ENCODE measurements at regions of chr14 and their contacts with region 1.

Region 1: GRCh38 chr14:74109369-74109768 is 24.6 kb downstream of the LIN52 start:
- DNase-seq: no peak

Region 2: GRCh38 chr14:74202113-74202512 is 92.7 kb after region 1 on chr14:
- in situ Hi-C with region 1: no loop called
- DNase-seq: no peak

Region 3: GRCh38 chr14:74290415-74290814 is 181.0 kb after region 1 on chr14:
- in situ Hi-C with region 1: loop called (anchors 25 kb)
- DNase-seq: no peak